AG04449 (cell line): ENCODE measurements at regions of chr6 and their contacts with region 1.

Region 1: DNA sequence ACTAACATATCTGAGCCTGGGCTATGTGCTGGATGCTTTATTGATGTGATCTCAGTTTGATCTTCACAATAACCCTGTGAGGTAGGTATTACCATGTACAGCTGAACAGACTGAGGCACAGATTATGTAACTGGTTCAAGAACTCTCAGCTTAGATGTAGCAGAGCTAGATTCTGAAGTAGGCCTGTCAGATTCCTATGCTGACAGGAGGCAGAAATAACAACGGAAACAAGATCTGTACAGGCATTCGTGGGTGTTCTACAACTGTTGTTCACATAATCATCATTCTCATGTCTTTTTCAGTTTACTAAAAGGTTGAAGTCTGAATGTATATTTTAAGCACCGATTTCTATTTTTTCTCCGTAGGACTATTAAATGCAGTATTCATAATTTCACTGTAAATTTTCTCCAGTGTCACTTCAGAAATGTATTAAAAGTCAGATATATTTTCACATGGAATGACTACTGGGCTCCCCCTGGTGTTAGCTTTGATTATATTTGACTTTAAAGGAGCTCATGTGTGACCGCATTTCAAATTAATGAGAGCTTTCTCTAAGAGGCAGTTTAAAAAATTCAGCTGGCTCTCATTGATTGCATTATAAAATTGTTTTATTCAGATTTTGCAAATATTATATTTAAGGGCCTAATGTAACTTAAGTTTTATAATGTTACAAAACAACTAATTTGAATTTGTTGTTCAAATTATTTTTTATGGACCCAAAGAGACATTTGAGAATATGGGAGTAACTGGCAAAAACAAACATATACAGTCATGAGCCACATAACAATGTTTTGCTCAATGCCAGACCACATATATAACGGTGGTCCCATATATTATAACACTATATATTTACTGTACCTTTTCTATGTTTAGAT is 36.4 kb upstream of the SLC17A4 start:
- DNase-seq: no peak
- H3K4me3 ChIP-seq: no peak overlapping the region
- CTCF ChIP-seq: peak; percentile 35

Region 2: DNA sequence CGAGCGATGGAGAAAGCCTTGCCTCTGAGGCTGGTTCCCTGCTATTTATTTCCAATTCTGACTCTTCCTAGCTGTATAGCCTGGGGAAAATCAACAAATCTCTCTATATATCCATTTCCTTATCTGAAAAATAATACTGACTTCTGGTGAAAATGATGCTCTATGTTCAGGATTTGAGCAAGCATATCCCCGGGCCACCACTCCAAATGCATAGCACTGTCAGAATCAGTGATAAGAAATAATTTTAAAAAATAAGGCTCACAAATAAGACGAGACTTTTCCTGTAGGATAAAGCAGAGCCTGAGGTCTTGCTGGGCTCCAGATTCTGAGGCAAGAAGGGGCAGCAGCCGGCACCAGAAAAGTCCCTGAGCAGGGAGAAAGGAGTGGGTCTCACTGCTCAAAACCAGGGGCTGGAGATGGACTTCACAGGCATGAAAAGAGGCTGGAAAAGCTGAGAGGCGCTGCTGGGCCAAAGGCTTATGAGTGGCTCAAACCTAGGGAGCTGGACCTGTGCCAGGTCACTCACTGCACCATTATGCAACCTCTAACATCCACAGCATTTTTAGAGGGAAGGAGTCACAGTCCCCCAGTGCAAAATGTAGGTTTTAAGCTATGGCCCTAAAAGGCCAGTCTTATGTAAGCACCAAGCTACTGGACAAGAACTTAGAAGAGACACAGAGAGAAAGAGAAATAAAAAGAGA is 11.6 kb before region 1 on chr6:
- CTCF ChIA-PET with region 1: interaction called, 10 read pairs
- POLR2A ChIA-PET with region 1: no interaction called
- DNase-seq: no peak
- H3K4me3 ChIP-seq: no peak overlapping the region
- CTCF ChIP-seq: no peak

Region 3: GRCh38 chr6:25801436-25801835 is 83.3 kb after region 1 on chr6:
- CTCF ChIA-PET with region 1: no interaction called
- POLR2A ChIA-PET with region 1: no interaction called
- DNase-seq: no peak
- H3K4me3 ChIP-seq: no peak overlapping the region
- CTCF ChIP-seq: no peak

Region 4: DNA sequence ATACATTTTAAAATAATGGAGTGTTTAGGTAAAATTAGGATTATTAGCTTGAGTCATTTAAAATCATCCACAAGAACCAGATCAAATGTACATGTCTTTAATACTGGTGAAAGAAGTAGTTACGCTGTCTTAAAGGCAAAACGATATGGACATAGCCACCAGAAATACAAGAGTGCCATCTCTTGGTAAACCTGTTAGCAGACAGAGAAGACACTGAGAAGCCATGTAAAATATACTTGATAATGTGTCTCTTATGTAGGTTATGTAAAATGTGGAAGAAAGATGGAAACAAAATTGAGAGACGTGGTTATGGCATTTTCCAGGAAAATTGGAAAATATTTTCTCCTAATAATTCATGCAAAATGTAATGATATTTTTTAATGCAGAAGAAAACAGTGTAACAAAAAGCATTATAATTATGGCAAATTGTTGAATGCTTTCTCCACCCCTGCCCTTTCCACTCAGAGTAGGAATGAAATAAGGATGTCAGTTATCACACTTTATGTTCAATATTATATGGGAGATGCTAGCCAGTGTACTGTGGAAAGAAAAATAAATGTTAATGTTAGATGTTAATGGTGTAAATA is 224.6 kb after region 1 on chr6:
- CTCF ChIA-PET with region 1: interaction called, 28 read pairs
- POLR2A ChIA-PET with region 1: no interaction called
- DNase-seq: peak; percentile 16
- H3K4me3 ChIP-seq: no peak overlapping the region
- CTCF ChIP-seq: peak; percentile 19